HCT116 (cell line): ENCODE measurements at regions of chr2 and their contacts with region 1.

Region 1: GRCh38 chr2:112941753-112942658 is 31.0 kb downstream of the IL37 start:
- DNase-seq: peak; percentile 64
- ATAC-seq: peak; percentile 97
- H3K4me3 ChIP-seq: no peak overlapping the region
- H3K27ac ChIP-seq: no peak overlapping the region
- H3K4me1 ChIP-seq: peaks cover 5 to 17% of the 10 kb centered on the region in 2 experiments
- H3K27me3 ChIP-seq: no peaks in the 10 kb centered on the region
- CTCF ChIP-seq: peak; percentile 75 to 96 (median 93)
- POLR2A ChIP-seq: no peak
- RAD21 ChIP-seq: peak; percentile 93

Region 2: GRCh38 chr2:112626604-112627059 is 315.4 kb before region 1 on chr2:
- CTCF ChIA-PET with region 1: interaction called, 19 read pairs
- POLR2A ChIA-PET with region 1: no interaction called
- RAD21 ChIA-PET with region 1: no interaction called
- intact Hi-C with region 1: no loop called
- DNase-seq: no peak
- ATAC-seq: peak; percentile 75
- H3K4me3 ChIP-seq: peak overlapping the region in 1 of 2 experiments; percentile 38; a peak in 3 of 4 replicates
- H3K27ac ChIP-seq: peak overlapping the region; percentile 49
- H3K4me1 ChIP-seq: peaks cover 56 to 100% of the 10 kb centered on the region in 2 experiments
- H3K27me3 ChIP-seq: no peaks in the 10 kb centered on the region
- CTCF ChIP-seq: peak; percentile 91 to 96 (median 95)
- POLR2A ChIP-seq: no peak
- RAD21 ChIP-seq: peak; percentile 97

Region 3: GRCh38 chr2:112749755-112750559 is 192.0 kb before region 1 on chr2:
- CTCF ChIA-PET with region 1: interaction called, 86 read pairs
- POLR2A ChIA-PET with region 1: interaction called, 6 read pairs
- RAD21 ChIA-PET with region 1: interaction called, 9 to 11 read pairs
- intact Hi-C with region 1: loop called (anchors 1 kb)
- DNase-seq: no peak
- ATAC-seq: peak; percentile 94
- H3K4me3 ChIP-seq: no peak overlapping the region
- H3K27ac ChIP-seq: no peak overlapping the region
- H3K4me1 ChIP-seq: no peaks in the 10 kb centered on the region
- H3K27me3 ChIP-seq: no peaks in the 10 kb centered on the region
- CTCF ChIP-seq: peak; percentile 83 to 96 (median 92)
- POLR2A ChIP-seq: no peak
- RAD21 ChIP-seq: peak; percentile 81

Region 4: DNA sequence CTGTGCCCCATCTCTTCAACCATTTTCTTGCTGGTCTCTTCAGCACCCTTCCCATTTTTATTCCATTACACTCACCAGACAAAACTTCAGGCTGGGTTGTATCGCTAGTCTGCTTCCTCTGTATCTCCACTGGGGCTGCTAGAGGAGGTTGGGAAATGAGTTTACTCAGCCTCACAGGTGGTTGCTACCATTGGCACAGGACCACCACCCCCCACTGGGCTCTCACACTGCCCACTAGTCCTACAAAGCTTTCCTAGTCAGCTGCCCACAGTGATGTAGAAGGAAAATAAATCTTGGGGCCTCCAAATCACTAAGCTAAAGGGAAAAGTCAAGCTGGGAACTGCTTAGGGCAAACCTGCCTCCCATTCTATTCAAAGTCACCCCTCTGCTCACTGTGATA is 93.2 kb before region 1 on chr2:
- CTCF ChIA-PET with region 1: no interaction called
- POLR2A ChIA-PET with region 1: no interaction called
- RAD21 ChIA-PET with region 1: no interaction called
- intact Hi-C with region 1: no loop called
- DNase-seq: no peak
- ATAC-seq: no peak
- H3K4me3 ChIP-seq: no peak overlapping the region
- H3K27ac ChIP-seq: no peak overlapping the region
- H3K4me1 ChIP-seq: no peaks in the 10 kb centered on the region
- H3K27me3 ChIP-seq: no peaks in the 10 kb centered on the region
- CTCF ChIP-seq: no peak
- POLR2A ChIP-seq: no peak
- RAD21 ChIP-seq: no peak

Region 5: DNA sequence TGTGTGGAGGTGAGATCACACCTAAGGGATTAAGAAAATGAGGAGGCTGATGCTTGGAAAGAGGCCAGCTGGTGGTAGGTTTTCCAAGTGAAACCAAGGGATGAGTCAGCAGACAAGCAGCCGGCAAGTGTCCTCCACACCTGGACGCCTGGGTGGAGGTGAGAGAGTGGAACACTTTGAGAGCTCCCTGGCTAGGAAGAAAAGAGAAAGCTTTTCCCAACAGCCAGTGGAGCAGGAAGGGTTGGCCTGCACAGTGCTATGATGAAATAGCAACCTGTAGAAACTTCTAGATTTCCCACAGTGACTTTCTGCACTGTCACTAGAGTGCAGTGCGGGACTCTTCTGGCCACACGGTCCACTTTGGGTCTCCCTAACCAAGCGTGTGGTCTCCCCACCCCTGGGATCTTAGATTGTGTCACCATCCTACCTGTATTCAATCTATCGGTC is 50.6 kb before region 1 on chr2:
- CTCF ChIA-PET with region 1: interaction called, 29 read pairs
- POLR2A ChIA-PET with region 1: no interaction called
- RAD21 ChIA-PET with region 1: interaction called in 1 of 2 experiments, 3 read pairs
- intact Hi-C with region 1: no loop called
- DNase-seq: peak; percentile 72
- ATAC-seq: peak; percentile 89
- H3K4me3 ChIP-seq: no peak overlapping the region
- H3K27ac ChIP-seq: no peak overlapping the region
- H3K4me1 ChIP-seq: peaks cover 9 to 18% of the 10 kb centered on the region in 2 experiments; a peak in 3 of 4 replicates
- H3K27me3 ChIP-seq: no peaks in the 10 kb centered on the region
- CTCF ChIP-seq: no peak
- POLR2A ChIP-seq: no peak
- RAD21 ChIP-seq: no peak

Region 6: GRCh38 chr2:112958428-112959108 is 16.6 kb after region 1 on chr2:
- CTCF ChIA-PET with region 1: interaction called, 26 read pairs
- POLR2A ChIA-PET with region 1: no interaction called
- RAD21 ChIA-PET with region 1: no interaction called
- intact Hi-C with region 1: no loop called
- DNase-seq: peak; percentile 41
- ATAC-seq: peak; percentile 95
- H3K4me3 ChIP-seq: no peak overlapping the region
- H3K27ac ChIP-seq: no peak overlapping the region
- H3K4me1 ChIP-seq: peaks cover 0 to 13% of the 10 kb centered on the region in 2 experiments; a peak in 1 of 4 replicates
- H3K27me3 ChIP-seq: no peaks in the 10 kb centered on the region
- CTCF ChIP-seq: peak; percentile 62 to 92 (median 89); a peak in 5 of 6 replicates
- POLR2A ChIP-seq: no peak
- RAD21 ChIP-seq: peak; percentile 65